CD14-positive monocyte (primary cell): ENCODE measurements at regions of chr3 and their contacts with region 1.

Region 1: GRCh38 chr3:47315069-47315647 is 32.4 kb downstream of the KLHL18 start:
- DNase-seq: peak in 2 of 3 donors; percentile 28 to 46
- H3K4me3 ChIP-seq: peak overlapping the region in 1 of 3 experiments; percentile 35
- H3K4me3 Mint-ChIP-seq: peak overlapping the region in 1 of 2 donors; percentile 44
- H3K27ac ChIP-seq: peak overlapping the region in 1 of 2 donors; percentile 54
- H3K27ac Mint-ChIP-seq: peak overlapping the region; percentile 16 to 78 (median 54)
- H3K4me1 ChIP-seq: peaks cover 37 to 48% of the 10 kb centered on the region in 2 donors
- H3K4me1 Mint-ChIP-seq: peaks cover 56% of the 10 kb centered on the region
- H3K27me3 ChIP-seq: no peaks in the 10 kb centered on the region
- H3K27me3 Mint-ChIP-seq: no peaks in the 10 kb centered on the region
- CTCF ChIP-seq: no peak

Region 2: DNA sequence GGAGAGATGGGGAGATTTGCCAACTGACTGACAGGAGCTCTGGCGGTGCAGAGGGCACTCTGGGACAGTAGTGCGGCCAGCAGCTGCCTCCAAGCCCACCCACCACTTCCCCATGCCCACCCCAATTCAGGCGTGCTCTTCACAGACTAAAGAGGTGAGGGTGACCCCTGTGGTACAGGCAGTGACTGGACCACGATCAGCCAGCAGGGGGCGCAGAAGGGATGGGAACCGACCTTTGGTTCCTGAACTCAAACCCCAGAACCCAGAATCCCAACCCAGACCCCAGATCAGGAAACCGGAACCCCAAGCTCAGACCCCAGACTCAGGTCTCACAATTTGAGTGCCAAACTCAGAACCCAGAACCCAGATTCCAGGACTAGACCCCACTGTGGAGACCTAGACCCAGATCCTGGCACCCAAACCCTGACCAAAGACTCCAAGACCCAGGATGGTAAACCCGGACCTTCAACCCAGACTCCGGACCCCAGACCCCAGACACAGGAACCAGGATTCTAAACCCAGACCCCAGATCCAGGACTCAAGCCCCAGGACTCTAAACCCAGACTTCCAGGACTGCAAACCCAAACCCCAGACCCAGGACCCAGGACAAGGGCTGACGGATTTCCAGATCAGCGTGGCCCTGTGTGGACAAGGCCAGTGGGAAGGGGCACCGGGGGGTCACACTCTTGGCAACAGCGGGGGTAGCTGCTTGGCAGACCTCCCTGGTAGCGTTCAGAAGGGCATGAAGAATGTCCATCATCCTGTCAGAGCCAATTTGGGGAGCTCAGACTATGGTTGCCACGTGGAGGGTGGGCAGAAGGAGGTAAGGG is 448.2 kb before region 1 on chr3:
- intact Hi-C with region 1: loop called in 1 of 2 experiments (anchors 10 kb)
- DNase-seq: peak; percentile 53 to 69 (median 67)
- H3K4me3 ChIP-seq: no peak overlapping the region
- H3K4me3 Mint-ChIP-seq: no peak overlapping the region
- H3K27ac ChIP-seq: no peak overlapping the region
- H3K27ac Mint-ChIP-seq: no peak overlapping the region
- H3K4me1 ChIP-seq: peaks cover 14 to 16% of the 10 kb centered on the region in 2 donors
- H3K4me1 Mint-ChIP-seq: peaks cover 18% of the 10 kb centered on the region
- H3K27me3 ChIP-seq: no peaks in the 10 kb centered on the region
- H3K27me3 Mint-ChIP-seq: peaks cover 5 to 6% (median 6%) of the 10 kb centered on the region in 3 donors
- CTCF ChIP-seq: peak; percentile 91

Region 3: DNA sequence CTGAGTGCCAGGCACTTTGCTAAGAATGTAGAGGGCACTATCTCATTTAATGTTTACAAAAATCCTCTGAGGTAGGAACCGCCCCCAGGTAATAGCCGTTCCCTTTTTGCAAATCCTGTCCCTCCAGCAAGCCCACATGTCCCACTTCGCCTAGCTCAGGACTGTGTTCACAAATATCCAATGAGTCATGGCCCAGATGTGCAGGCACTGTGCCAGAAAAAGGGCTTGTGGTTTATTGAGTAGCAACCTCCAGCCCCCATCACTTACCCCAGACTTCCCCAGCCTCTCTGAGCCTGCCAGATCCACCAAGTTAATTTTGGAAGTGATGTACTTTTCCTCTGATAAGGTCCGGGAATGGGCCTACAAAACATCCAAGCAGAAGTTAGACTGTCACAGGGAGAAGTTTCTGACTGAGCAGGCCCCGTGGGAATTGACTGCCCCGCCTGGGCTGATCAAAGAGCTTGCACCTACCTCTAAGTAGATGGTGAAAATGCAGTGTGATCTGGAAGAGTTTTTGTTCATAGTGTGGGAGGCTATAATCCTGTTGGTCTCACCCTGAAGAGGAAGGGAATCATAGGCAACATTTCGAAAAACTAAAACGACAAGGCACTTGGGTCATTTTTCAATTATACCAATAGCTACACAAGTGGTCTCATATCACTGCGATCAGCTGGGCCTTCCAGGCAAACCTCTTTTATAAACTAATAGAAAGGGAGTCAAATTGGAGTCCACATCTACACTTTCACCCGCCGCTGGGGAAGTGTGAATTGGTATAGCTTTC is 48.3 kb before region 1 on chr3:
- intact Hi-C with region 1: loop called in 1 of 2 experiments (anchors 10 kb)
- DNase-seq: peak; percentile 38 to 56 (median 53)
- H3K4me3 ChIP-seq: no peak overlapping the region
- H3K4me3 Mint-ChIP-seq: no peak overlapping the region
- H3K27ac ChIP-seq: no peak overlapping the region
- H3K27ac Mint-ChIP-seq: peak overlapping the region in 3 of 7 donors; percentile 47 to 65 (median 64)
- H3K4me1 ChIP-seq: peaks cover 7 to 20% of the 10 kb centered on the region in 2 donors
- H3K4me1 Mint-ChIP-seq: peaks cover 24% of the 10 kb centered on the region
- H3K27me3 ChIP-seq: no peaks in the 10 kb centered on the region
- H3K27me3 Mint-ChIP-seq: peaks cover 0 to 4% (median 2%) of the 10 kb centered on the region in 3 donors
- CTCF ChIP-seq: no peak

Region 4: DNA sequence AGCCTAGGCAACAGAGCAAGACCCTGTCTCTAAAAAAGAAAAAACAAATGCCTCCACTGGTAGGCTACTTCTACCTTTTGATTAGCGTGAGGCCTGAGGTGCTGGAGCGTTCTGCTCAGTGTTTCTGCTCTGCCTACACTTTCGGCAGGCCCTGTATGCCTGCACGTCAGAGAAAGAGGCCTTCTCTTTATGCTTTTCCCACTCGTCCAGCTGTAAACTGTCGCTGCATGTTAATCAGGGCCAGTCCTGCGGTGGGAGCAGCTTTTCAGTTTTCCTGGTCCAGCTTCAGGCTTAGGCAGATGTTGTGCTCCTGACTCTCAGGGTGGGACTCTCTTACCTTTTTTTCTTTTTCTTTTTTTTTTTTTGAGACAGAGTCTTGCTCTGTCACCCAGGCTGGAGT is 238.2 kb after region 1 on chr3:
- intact Hi-C with region 1: no loop called
- DNase-seq: no peak
- H3K4me3 ChIP-seq: no peak overlapping the region
- H3K4me3 Mint-ChIP-seq: no peak overlapping the region
- H3K27ac ChIP-seq: no peak overlapping the region
- H3K27ac Mint-ChIP-seq: no peak overlapping the region
- H3K4me1 ChIP-seq: no peaks in the 10 kb centered on the region
- H3K4me1 Mint-ChIP-seq: peaks cover 2% of the 10 kb centered on the region
- H3K27me3 ChIP-seq: peaks cover 0 to 3% of the 10 kb centered on the region in 2 donors
- H3K27me3 Mint-ChIP-seq: peaks cover 3 to 9% (median 4%) of the 10 kb centered on the region in 3 donors
- CTCF ChIP-seq: no peak